ENCODE measurements at regions of chr1 and their contacts with region 1.

Region 1: GRCh38 chr1:169485544-169486278 is at the start of gene SLC19A2:
- DNase-seq: peak; percentile 98
- ATAC-seq: peak; percentile 98
- H3K4me3 ChIP-seq: peak within 1 kb of the TSS; percentile 74 to 87 (median 81)
- H3K27ac ChIP-seq: peak within 1 kb of the TSS; percentile 95
- H3K4me1 ChIP-seq: peaks cover 62% of the 10 kb centered on the region
- H3K27me3 ChIP-seq: no peaks in the 10 kb centered on the region; a peak in 1 of 5 replicates
- CTCF ChIP-seq: peak; percentile 51
- EP300 ChIP-seq: peak; percentile 11 to 43; a peak in 1 of 4 replicates
- POLR2A ChIP-seq: peak; percentile 95 to 96
- RAD21 ChIP-seq: peak; percentile 11; the same call in 1 of the 2 replicates
- total RNA-seq, gene SLC19A2: 19.1 and 30.4 TPM in 2 replicates

Region 2: GRCh38 chr1:169367486-169368405 is 118.0 kb before region 1 on chr1 and contains the starts of genes BLZF1 and NME7:
- CTCF ChIA-PET with region 1: no interaction called
- POLR2A ChIA-PET with region 1: interaction called, 13 read pairs
- in situ Hi-C with region 1: no loop called
- intact Hi-C with region 1: no loop called
- DNase-seq: peak; percentile 94
- ATAC-seq: peak; percentile 99
- H3K4me3 ChIP-seq: peak within 1 kb of the TSS; percentile 85 to 93 (median 92)
- H3K27ac ChIP-seq: peak within 1 kb of the TSS; percentile 79
- H3K4me1 ChIP-seq: peaks cover 27% of the 10 kb centered on the region
- H3K27me3 ChIP-seq: no peaks in the 10 kb centered on the region; a peak in 2 of 5 replicates
- CTCF ChIP-seq: no peak
- EP300 ChIP-seq: no peak
- POLR2A ChIP-seq: peak in 1 of 2 experiments; percentile 55
- RAD21 ChIP-seq: no peak
- total RNA-seq, gene BLZF1: 13.7 and 18.7 TPM in 2 replicates
- total RNA-seq, gene NME7: 22.5 and 29.5 TPM in 2 replicates

Region 3: GRCh38 chr1:169521226-169521625 is 35.5 kb after region 1 on chr1:
- CTCF ChIA-PET with region 1: no interaction called
- POLR2A ChIA-PET with region 1: interaction called, 6 read pairs
- in situ Hi-C with region 1: no loop called
- intact Hi-C with region 1: loop called (anchors 5 kb)
- DNase-seq: no peak
- ATAC-seq: peak; percentile 35; the same call in 2 of the 3 replicates
- H3K4me3 ChIP-seq: no peak overlapping the region
- H3K27ac ChIP-seq: no peak overlapping the region
- H3K4me1 ChIP-seq: peaks cover 25% of the 10 kb centered on the region
- H3K27me3 ChIP-seq: no peaks in the 10 kb centered on the region; a peak in 1 of 5 replicates
- CTCF ChIP-seq: no peak
- EP300 ChIP-seq: no peak
- POLR2A ChIP-seq: no peak
- RAD21 ChIP-seq: no peak